GM12878 (cell line): ENCODE measurements at regions of chr7 and their contacts with region 1.

Region 1: DNA sequence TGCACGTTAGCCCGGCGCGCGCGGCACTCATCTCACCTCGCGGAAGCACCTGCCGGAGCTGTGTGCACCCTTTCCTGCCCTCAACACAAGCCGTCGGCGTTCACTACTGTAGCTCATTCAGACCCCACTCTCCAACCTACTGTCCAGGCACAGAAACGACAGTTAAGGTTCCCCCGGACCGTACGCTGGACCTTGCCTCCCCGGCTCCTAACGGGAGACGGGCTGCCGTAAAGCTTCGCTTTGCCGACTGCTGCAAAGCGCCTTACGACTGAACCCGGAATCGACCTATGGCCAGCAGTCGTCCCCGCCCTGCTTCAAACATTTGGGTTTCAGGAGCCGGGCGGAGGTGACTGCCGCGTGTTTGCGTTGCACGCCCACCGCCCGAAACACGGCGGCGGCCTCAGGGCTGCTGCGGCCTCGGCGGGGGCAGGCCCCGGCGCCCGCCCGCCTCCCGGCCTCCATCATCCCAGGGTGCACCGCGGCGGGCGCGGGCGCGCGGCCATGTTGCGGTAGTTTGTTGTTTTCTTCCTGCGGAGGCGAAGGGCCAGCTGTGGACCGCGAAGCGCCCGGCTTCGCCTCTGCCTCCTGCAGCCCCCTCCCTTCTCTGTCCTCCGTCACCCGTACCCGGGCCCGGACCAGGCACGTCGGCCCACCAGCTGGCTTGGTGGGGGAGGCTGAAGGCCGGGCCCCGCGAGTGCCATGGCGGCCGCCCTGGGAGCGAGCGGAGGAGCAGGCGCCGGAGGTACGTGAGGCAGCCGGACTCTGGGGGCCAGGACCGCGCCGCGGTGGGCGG is at the start of gene RBM33:
- DNase-seq: peak; percentile 41
- ATAC-seq: peak; percentile 89
- H3K4me3 ChIP-seq: peak within 1 kb of the TSS; percentile 80
- H3K27ac ChIP-seq: peak within 1 kb of the TSS; percentile 96
- H3K4me1 ChIP-seq: no peaks in the 10 kb centered on the region
- H3K27me3 ChIP-seq: no peaks in the 10 kb centered on the region
- CTCF ChIP-seq: no peak
- EP300 ChIP-seq: no peak
- POLR2A ChIP-seq: peak; percentile 90
- RAD21 ChIP-seq: no peak
- polyA plus RNA-seq, gene RBM33: 4.7 to 5.6 TPM

Region 2: GRCh38 chr7:155660059-155660757 is 15.8 kb after region 1 on chr7:
- CTCF ChIA-PET with region 1: interaction called, 3 read pairs
- POLR2A ChIA-PET with region 1: interaction called, 3 read pairs
- RAD21 ChIA-PET with region 1: interaction called, 6 read pairs
- SMC1A ChIA-PET with region 1: interaction called, 7 read pairs
- in situ Hi-C with region 1: no loop called
- intact Hi-C with region 1: loop called (anchors 2 kb)
- DNase-seq: peak; percentile 67
- ATAC-seq: peak; percentile 89
- H3K4me3 ChIP-seq: peak overlapping the region; percentile 49
- H3K27ac ChIP-seq: peak overlapping the region; percentile 84
- H3K4me1 ChIP-seq: peaks cover 13% of the 10 kb centered on the region
- H3K27me3 ChIP-seq: no peaks in the 10 kb centered on the region
- CTCF ChIP-seq: no peak
- EP300 ChIP-seq: no peak
- POLR2A ChIP-seq: no peak
- RAD21 ChIP-seq: no peak

Region 3: GRCh38 chr7:155681663-155682062 is 37.3 kb after region 1 on chr7:
- CTCF ChIA-PET with region 1: no interaction called
- POLR2A ChIA-PET with region 1: interaction called, 6 read pairs
- RAD21 ChIA-PET with region 1: interaction called, 3 read pairs
- SMC1A ChIA-PET with region 1: interaction called, 5 read pairs
- in situ Hi-C with region 1: no loop called
- intact Hi-C with region 1: loop called (anchors 5 kb)
- DNase-seq: no peak
- ATAC-seq: peak; percentile 17
- H3K4me3 ChIP-seq: no peak overlapping the region
- H3K27ac ChIP-seq: no peak overlapping the region
- H3K4me1 ChIP-seq: peaks cover 13% of the 10 kb centered on the region
- H3K27me3 ChIP-seq: no peaks in the 10 kb centered on the region
- CTCF ChIP-seq: no peak
- EP300 ChIP-seq: no peak
- POLR2A ChIP-seq: no peak
- RAD21 ChIP-seq: no peak

Region 4: DNA sequence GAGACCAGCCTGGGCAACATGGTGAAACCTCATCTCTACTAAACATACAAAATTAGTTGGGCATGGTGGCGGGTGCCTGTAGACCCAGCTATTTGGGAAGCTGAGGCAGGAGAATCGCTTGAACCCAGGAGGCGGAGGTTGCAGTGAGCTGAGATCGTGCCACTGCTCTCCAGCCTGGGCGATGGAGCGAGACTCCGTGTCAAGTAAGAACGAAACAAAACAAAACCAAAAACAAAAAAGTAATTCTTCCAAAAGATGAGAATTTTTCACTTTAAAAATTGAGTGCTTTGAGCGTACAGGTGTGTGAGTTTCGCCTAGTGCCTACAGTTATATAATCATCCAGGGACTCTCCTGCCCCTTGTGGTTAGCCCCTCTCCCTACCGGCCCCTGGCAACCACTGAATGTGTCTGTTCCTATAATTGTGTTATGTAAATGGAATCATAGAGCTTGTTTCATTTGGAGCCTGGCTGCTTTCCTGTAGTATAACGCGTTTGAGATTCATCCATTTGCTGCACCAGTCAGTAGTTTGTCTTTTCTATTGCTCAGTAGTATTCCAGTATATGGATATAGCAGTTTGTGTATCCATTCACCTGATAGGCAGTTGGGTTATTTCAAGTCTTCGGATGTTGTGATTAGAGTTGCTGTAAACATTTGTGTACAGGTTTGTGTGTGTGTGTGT is 80.1 kb after region 1 on chr7:
- CTCF ChIA-PET with region 1: no interaction called
- POLR2A ChIA-PET with region 1: interaction called, 10 read pairs
- RAD21 ChIA-PET with region 1: no interaction called
- SMC1A ChIA-PET with region 1: interaction called, 4 read pairs
- in situ Hi-C with region 1: no loop called
- intact Hi-C with region 1: loop called (anchors 2 kb)
- DNase-seq: no peak
- ATAC-seq: peak; percentile 78
- H3K4me3 ChIP-seq: peak overlapping the region; percentile 62
- H3K27ac ChIP-seq: peak overlapping the region; percentile 87
- H3K4me1 ChIP-seq: peaks cover 39% of the 10 kb centered on the region
- H3K27me3 ChIP-seq: no peaks in the 10 kb centered on the region
- CTCF ChIP-seq: peak; percentile 16 to 27 (median 23); a peak in 2 of 6 replicates
- EP300 ChIP-seq: no peak
- POLR2A ChIP-seq: no peak
- RAD21 ChIP-seq: no peak